Endothelial cell of umbilical vein (primary cell): ENCODE measurements at regions of chr5 and their contacts with region 1.

Region 1: DNA sequence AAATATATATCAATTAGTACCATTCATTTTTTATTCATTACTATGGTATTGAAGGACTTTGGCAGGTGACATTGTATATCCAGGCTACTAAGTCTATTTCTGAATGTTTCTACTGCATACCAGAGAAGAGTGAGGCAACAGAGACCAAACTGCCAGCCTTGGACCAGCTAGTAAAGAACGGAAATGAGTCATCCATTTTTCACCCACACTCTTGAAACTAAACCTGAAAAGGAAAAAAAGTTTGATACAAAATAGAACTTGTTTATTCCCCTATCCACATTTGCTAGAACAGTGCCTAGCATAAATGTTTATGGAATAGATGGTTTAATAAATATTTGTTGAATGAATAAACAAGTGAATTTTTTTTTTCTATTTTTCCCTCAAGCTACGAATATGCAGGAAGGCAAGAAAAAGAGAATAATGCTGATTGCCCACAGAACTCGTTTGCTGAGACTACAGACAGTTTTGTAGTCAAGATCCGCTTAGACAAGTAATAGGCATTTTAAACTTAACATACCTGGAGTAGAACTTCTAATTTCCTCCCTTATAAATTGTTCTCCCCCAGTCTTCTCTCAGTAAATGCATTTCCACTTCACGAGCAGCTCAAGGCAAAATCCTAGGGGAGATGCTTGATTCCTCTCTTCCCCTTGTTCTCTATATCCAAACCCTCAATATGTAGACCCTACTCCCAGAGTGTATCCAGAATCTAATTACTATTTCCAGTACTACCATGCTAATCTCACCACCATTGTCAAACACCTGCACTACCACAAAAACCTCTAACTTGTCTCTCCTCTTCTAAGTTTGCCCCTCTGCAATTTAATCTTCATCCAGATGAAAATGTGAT is 146.2 kb upstream of the RASA1 start:
- DNase-seq: peak; percentile 89
- H3K4me3 ChIP-seq: peak overlapping the region in 1 of 3 experiments; percentile 2
- H3K27ac ChIP-seq: peak overlapping the region; percentile 98
- H3K4me1 ChIP-seq: peaks cover 30% of the 10 kb centered on the region
- H3K27me3 ChIP-seq: no peaks in the 10 kb centered on the region
- CTCF ChIP-seq: no peak
- POLR2A ChIP-seq: no peak

Region 2: DNA sequence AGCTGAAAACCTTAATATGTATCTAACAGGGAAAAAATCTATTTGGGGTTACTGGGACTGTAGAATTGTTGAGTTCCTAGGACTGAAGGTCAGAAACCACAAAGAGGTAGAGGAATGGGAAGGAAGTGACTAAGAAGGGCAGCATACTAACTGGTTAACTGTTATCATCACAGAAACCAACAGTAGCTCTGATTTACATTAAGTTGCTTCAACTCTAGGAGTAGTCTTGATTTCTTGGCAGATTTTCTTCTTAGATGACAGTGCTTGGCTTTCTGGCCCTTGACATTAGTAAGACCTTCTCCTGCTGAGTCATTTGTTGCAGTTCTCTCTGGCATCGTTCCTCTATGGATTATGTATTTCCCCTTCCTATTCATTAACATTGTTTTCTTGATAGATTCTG is 30.0 kb after region 1 on chr5:
- CTCF ChIA-PET with region 1: interaction called, 5 read pairs
- POLR2A ChIA-PET with region 1: interaction called, 3 read pairs
- dilution Hi-C with region 1: no loop called
- intact Hi-C with region 1: loop called (anchors 1 kb)
- DNase-seq: peak; percentile 78
- H3K4me3 ChIP-seq: no peak overlapping the region
- H3K27ac ChIP-seq: peak overlapping the region; percentile 82
- H3K4me1 ChIP-seq: peaks cover 31% of the 10 kb centered on the region
- H3K27me3 ChIP-seq: no peaks in the 10 kb centered on the region
- CTCF ChIP-seq: no peak
- POLR2A ChIP-seq: no peak

Region 3: GRCh38 chr5:87195104-87195591 is 73.6 kb after region 1 on chr5:
- CTCF ChIA-PET with region 1: interaction called, 3 read pairs
- POLR2A ChIA-PET with region 1: interaction called, 3 read pairs
- dilution Hi-C with region 1: no loop called
- intact Hi-C with region 1: loop called (anchors 1 kb)
- DNase-seq: peak; percentile 85
- H3K4me3 ChIP-seq: peak overlapping the region in 1 of 3 experiments; percentile 40
- H3K27ac ChIP-seq: peak overlapping the region; percentile 98
- H3K4me1 ChIP-seq: peaks cover 25% of the 10 kb centered on the region
- H3K27me3 ChIP-seq: no peaks in the 10 kb centered on the region
- CTCF ChIP-seq: no peak
- POLR2A ChIP-seq: no peak

Region 4: DNA sequence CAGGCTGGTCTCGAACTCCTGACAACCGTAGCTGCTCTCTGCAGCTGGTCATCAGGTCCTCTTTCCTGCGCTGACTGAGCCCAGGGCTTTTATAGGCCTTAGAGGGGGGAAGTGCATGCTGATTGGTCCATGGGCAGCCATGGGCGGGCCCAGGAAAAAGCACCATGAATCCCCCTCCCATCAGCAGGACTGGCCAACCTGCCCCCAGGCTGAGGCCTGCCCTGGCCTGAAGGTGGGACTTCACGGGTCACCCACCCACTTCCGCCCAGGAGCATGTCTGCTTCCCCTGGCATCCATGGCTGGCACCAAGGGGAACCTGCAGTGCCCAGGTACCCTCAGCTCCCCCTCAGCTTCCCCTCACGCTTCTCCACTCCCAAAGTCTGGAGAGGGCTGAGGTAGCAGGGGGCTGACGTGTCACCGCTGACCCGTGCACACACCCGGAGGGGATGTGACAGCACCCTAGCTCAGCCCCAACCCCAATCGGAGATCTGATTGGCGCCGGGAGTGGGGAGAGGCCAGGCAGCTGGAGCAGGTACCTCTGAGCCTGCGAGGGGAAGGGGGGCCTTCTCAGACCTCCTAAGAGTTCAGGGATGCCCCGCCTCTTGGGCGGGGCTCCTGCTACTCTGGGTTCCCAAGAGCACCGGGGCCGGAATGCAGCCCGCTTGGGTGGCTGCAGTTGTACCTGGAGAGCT is 130.2 kb after region 1 on chr5:
- CTCF ChIA-PET with region 1: no interaction called
- POLR2A ChIA-PET with region 1: no interaction called
- dilution Hi-C with region 1: no loop called
- intact Hi-C with region 1: no loop called
- DNase-seq: no peak
- H3K4me3 ChIP-seq: no peak overlapping the region
- H3K27ac ChIP-seq: no peak overlapping the region
- H3K4me1 ChIP-seq: no peaks in the 10 kb centered on the region
- H3K27me3 ChIP-seq: no peaks in the 10 kb centered on the region
- CTCF ChIP-seq: no peak
- POLR2A ChIP-seq: no peak

Region 5: GRCh38 chr5:87393331-87393730 is 271.8 kb after region 1 on chr5:
- CTCF ChIA-PET with region 1: no interaction called
- POLR2A ChIA-PET with region 1: no interaction called
- dilution Hi-C with region 1: no loop called
- intact Hi-C with region 1: loop called (anchors 1 kb)
- DNase-seq: peak; percentile 79
- H3K4me3 ChIP-seq: no peak overlapping the region
- H3K27ac ChIP-seq: peak overlapping the region; percentile 91
- H3K4me1 ChIP-seq: peaks cover 25% of the 10 kb centered on the region
- H3K27me3 ChIP-seq: no peaks in the 10 kb centered on the region
- CTCF ChIP-seq: no peak
- POLR2A ChIP-seq: no peak